Heart right ventricle (tissue), 16 donors: ENCODE measurements at regions of chr3 and their contacts with region 1.

Region 1: GRCh38 chr3:54427941-54428871 is 305.9 kb downstream of the CACNA2D3 start:
- DNase-seq: peak in 1 of 2 donors; percentile 48
- ATAC-seq: peak in 2 of 8 donors; percentile 46 to 61
- H3K4me3 ChIP-seq: no peak overlapping the region
- H3K27ac ChIP-seq: no peak overlapping the region
- H3K4me1 ChIP-seq: no peaks in the 10 kb centered on the region
- H3K27me3 ChIP-seq: no peaks in the 10 kb centered on the region
- CTCF ChIP-seq: peak; percentile 53 to 85 (median 81)

Region 2: GRCh38 chr3:54859184-54859583 is 431.0 kb after region 1 on chr3:
- intact Hi-C with region 1: loop called in 4 of 10 experiments (anchors 5 to 10 kb)
- DNase-seq: no peak
- ATAC-seq: no peak
- H3K4me3 ChIP-seq: no peak overlapping the region
- H3K27ac ChIP-seq: no peak overlapping the region
- H3K4me1 ChIP-seq: peaks cover 0 to 33% (median 8%) of the 10 kb centered on the region in 9 donors
- H3K27me3 ChIP-seq: no peaks in the 10 kb centered on the region
- CTCF ChIP-seq: no peak

Region 3: DNA sequence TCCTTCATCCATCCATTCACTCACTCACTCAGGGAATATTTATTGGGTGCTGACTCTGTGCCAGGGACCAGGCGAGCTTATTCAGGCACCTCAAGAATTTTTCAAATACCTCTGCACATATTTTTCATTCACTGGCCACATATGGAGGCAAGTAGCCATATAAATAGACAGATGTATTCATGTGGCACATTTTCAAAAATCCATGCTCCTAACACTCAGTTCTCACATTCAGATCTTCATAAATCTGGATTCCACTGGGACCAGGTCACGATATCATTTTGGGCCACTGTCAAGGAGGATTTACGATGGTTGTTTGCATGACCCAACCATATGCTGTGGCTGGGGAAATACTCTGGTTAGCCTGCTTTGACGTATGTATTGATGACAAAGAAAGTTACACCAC is 741.4 kb after region 1 on chr3:
- intact Hi-C with region 1: loop called in 1 of 10 experiments (anchors 10 kb)
- DNase-seq: no peak
- ATAC-seq: no peak
- H3K4me3 ChIP-seq: no peak overlapping the region
- H3K27ac ChIP-seq: no peak overlapping the region
- H3K4me1 ChIP-seq: no peaks in the 10 kb centered on the region
- H3K27me3 ChIP-seq: peaks cover 0 to 16% (median 0%) of the 10 kb centered on the region in 7 donors
- CTCF ChIP-seq: no peak

Region 4: DNA sequence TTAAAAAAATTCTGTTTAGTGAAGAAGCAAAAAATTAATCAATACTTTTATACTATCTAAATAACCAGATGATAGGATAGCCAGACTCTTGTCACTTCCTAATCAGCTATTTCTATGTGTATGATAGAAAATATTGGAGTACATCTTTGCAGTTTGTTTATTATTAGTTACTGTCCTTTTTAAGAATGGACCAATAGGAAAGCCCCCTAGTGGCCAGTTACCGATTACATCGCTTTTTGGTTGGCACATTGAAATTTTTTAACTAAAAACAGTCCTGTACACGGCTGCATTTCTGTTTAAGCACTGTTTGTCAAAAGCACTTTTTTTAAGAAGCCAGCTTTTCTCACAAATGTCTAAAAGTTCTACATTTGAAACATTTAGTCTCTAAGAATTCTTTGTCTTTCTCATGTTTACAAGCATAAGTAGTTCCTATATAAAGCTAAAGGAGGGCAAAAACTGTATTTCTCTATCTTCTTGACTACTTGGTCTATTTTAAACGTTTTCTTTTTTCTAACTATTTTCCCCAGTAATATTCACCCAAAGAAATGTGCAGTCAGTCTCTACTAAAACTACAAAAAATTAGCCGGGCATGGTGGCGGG is 752.8 kb after region 1 on chr3:
- intact Hi-C with region 1: loop called in 3 of 10 experiments (anchors 5 to 10 kb)
- DNase-seq: peak in 1 of 2 donors; percentile 36
- ATAC-seq: no peak
- H3K4me3 ChIP-seq: no peak overlapping the region
- H3K27ac ChIP-seq: no peak overlapping the region
- H3K4me1 ChIP-seq: no peaks in the 10 kb centered on the region
- H3K27me3 ChIP-seq: peaks cover 0 to 18% (median 11%) of the 10 kb centered on the region in 7 donors
- CTCF ChIP-seq: peak; percentile 57 to 83 (median 70)

Region 5: DNA sequence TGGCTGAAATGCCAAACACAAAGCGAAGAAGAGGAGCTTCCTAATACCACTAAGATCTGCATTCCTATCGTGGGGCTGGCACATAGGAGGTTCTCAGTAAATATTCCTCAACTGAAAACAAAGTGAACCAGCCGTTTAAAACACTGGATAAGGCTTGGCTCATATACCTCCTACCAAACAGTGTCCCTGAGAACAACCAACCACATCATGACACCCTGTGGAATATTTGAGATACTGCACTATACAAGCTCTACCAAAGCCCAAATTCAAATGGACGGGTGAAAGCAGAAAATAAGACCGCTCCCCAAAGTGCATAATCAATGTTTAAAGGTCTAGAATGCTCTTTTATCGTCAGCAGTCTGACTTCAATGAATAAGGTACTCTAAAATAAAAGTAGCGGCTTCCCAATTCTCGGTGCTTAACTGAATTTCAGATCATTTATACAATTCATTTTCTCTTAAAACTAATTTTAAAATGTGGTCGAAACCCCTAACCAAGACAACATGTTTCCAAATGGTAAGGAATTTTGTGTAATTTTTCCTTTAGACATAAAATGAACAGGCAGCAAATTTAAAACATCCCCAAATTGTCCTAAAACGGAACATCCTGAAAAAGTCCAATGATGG is 1614.2 kb after region 1 on chr3:
- intact Hi-C with region 1: loop called in 1 of 10 experiments (anchors 10 kb)
- DNase-seq: no peak
- ATAC-seq: peak in 6 of 8 donors; percentile 57 to 82 (median 64)
- H3K4me3 ChIP-seq: no peak overlapping the region
- H3K27ac ChIP-seq: no peak overlapping the region
- H3K4me1 ChIP-seq: no peaks in the 10 kb centered on the region
- H3K27me3 ChIP-seq: peaks cover 0 to 45% (median 11%) of the 10 kb centered on the region in 7 donors
- CTCF ChIP-seq: peak in 8 of 9 donors; percentile 33 to 66 (median 54)